ENCODE measurements at regions of chr10 and their contacts with region 1.

Region 1: GRCh38 chr10:128069351-128070051 is 56.7 kb downstream of the MKI67 start:
- DNase-seq: peak; percentile 33
- H3K4me3 ChIP-seq: no peak overlapping the region
- H3K27ac ChIP-seq: no peak overlapping the region
- H3K27me3 ChIP-seq: peaks cover 3% of the 10 kb centered on the region
- CTCF ChIP-seq: peak; percentile 81

Region 2: DNA sequence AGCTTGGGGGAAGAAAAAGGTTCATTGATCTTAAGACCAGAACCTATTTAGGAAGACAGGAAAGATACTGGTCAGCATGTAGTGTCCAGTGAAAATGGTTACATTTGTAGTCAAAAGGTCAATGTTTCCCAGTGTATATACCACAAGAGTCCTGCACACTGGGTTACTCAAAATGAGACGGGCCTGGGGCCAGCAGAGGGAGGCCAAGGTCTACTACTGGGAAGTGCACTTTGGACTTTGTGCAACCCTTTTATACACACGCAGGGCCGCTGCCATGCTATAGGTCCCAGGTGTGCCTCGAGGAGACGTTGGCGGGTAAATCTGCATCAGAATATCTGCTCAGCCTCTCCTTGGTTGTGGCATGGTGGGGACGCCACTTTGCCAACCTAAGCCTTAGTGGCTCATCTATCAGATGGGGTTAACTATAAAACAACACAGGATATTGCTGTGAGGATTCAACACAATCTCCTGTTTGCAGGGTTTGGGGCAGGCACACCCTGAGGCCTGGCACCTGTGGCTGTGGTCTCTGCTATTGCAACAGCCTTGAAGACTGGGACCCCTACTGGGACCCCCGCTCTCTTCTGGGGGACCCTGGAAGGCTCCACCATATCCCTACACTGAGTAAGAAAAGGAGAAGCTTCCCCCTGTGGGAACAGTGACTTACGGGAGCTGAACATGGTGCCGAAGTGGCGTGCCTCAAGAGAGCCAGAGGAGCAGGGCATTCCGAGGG is 196.5 kb before region 1 on chr10:
- CTCF ChIA-PET with region 1: no interaction called
- POLR2A ChIA-PET with region 1: no interaction called
- DNase-seq: no peak
- H3K4me3 ChIP-seq: no peak overlapping the region
- H3K27ac ChIP-seq: no peak overlapping the region
- H3K27me3 ChIP-seq: no peaks in the 10 kb centered on the region
- CTCF ChIP-seq: no peak

Region 3: GRCh38 chr10:128000471-128001362 is 68.8 kb before region 1 on chr10:
- CTCF ChIA-PET with region 1: no interaction called
- POLR2A ChIA-PET with region 1: no interaction called
- DNase-seq: no peak
- H3K4me3 ChIP-seq: no peak overlapping the region
- H3K27ac ChIP-seq: no peak overlapping the region
- H3K27me3 ChIP-seq: no peaks in the 10 kb centered on the region
- CTCF ChIP-seq: no peak

Region 4: DNA sequence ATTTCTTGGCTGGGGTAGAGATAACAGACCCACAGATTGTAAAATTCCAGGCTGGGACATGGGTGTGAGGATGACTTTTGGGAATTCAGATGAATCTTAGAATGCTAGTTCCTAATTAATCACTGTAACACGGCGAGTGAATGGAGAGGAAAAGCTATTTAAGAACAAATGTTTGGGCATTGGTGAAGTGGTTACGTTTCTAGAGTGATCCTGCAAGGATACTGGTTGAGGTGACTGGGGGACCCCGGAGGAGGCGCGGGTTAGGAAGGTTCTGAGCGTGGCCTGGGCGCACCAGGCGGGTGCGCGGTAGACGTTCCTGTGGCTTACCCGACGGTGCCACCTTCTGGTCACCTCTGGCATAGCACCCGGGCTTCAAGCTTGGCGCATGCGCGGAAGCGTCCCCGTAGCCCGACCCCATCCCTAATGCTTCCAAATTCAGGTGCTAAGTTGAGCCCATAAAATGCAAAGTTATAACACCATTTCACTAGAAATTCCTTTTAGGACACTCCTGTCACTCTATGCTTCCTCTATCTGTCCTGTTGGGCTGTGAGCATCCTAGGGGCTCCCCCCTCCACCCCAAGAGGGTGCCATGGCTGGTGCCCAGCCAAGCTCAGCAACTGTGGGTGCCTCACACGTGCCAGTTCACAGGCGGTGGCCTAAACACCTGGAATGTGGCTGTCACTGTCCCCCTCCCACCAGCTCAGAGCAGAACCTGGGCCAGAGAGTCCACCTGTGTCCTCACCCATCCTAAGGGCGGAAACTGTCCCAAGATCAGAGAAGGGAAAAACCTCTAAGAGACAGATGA is 58.1 kb before region 1 on chr10:
- CTCF ChIA-PET with region 1: interaction called, 10 read pairs
- POLR2A ChIA-PET with region 1: no interaction called
- DNase-seq: peak; percentile 16
- H3K4me3 ChIP-seq: no peak overlapping the region
- H3K27ac ChIP-seq: no peak overlapping the region
- H3K27me3 ChIP-seq: peaks cover 5% of the 10 kb centered on the region
- CTCF ChIP-seq: peak; percentile 93

Region 5: DNA sequence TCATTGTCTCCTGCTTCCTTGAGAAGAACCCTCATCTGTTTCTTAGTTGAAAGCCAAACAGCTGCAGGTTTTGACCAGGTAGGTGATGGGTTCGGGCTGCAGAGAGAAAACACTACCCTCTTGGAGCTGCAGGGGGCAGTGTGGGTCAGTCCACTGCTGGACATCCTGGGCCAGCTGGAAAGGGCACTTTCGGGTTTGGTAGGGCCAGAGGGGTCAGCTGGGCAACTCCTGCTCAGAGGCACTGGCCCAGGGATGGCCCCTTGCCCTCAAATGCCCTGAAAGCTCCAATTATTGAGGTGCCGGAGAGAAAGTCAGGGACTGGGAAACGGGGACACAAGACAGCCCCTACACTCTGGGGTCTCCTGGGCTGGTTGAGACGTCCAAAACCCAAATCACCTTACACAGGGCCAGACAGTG is 33.9 kb before region 1 on chr10:
- CTCF ChIA-PET with region 1: interaction called, 53 read pairs
- POLR2A ChIA-PET with region 1: no interaction called
- DNase-seq: no peak
- H3K4me3 ChIP-seq: no peak overlapping the region
- H3K27ac ChIP-seq: no peak overlapping the region
- H3K27me3 ChIP-seq: no peaks in the 10 kb centered on the region
- CTCF ChIP-seq: peak; percentile 67

Region 6: GRCh38 chr10:128047351-128047750 is 22.1 kb before region 1 on chr10:
- CTCF ChIA-PET with region 1: interaction called, 13 read pairs
- POLR2A ChIA-PET with region 1: no interaction called
- DNase-seq: no peak
- H3K4me3 ChIP-seq: no peak overlapping the region
- H3K27ac ChIP-seq: no peak overlapping the region
- H3K27me3 ChIP-seq: peaks cover 6% of the 10 kb centered on the region
- CTCF ChIP-seq: no peak

Region 7: DNA sequence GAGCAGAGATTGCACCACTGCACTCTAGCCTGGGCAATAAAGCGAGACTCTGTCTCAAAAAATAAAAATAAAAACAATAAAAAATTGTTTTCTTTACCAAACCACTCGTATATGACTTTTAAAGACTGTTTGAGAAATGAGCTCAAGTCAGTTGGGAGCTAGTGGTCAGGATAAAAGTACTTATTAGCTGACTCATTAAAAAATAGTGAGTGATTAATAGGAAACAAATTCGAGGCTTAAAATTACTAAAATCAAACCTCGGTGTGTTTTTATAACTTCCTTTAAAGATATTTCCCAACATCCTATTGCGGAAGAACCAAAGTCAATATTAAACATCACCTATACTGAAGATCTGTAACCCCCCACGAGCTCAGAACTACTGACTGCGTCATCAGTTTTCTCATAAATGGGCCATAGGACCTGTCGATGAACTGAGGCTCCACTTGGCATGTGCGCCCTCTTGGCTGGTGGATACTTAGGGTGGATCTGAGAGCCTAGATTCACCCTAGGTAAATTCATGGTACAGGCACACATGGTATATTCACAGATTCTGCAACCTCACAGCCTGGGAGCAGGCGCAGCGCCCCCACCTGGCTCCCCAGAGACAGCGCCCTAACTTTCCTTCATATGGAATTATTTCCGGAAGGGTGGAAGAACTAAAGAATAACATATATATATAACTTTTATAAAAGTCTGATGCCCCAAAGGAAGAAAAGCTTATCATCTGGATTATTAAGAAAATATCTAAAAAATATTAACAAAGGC is 47.5 kb after region 1 on chr10:
- CTCF ChIA-PET with region 1: interaction called, 10 read pairs
- POLR2A ChIA-PET with region 1: no interaction called
- DNase-seq: no peak
- H3K4me3 ChIP-seq: no peak overlapping the region
- H3K27ac ChIP-seq: no peak overlapping the region
- H3K27me3 ChIP-seq: no peaks in the 10 kb centered on the region
- CTCF ChIP-seq: no peak; the same call in 1 of the 2 replicates

Region 8: GRCh38 chr10:128161031-128161430 is 91.5 kb after region 1 on chr10:
- CTCF ChIA-PET with region 1: no interaction called
- POLR2A ChIA-PET with region 1: no interaction called
- DNase-seq: no peak
- H3K4me3 ChIP-seq: no peak overlapping the region
- H3K27ac ChIP-seq: no peak overlapping the region
- H3K27me3 ChIP-seq: peaks cover 2% of the 10 kb centered on the region
- CTCF ChIP-seq: no peak

Measured in AG04450 (cell line).